Left cardiac atrium (tissue), 4 donors: ENCODE measurements at regions of chr19 and their contacts with region 1.

Region 1: GRCh38 chr19:1275260-1275975 is at the start of gene FAM174C:
- DNase-seq: peak; percentile 97
- ATAC-seq: peak; percentile 83 to 93
- total RNA-seq, gene FAM174C: 19.2 to 21.4 TPM

Region 2: DNA sequence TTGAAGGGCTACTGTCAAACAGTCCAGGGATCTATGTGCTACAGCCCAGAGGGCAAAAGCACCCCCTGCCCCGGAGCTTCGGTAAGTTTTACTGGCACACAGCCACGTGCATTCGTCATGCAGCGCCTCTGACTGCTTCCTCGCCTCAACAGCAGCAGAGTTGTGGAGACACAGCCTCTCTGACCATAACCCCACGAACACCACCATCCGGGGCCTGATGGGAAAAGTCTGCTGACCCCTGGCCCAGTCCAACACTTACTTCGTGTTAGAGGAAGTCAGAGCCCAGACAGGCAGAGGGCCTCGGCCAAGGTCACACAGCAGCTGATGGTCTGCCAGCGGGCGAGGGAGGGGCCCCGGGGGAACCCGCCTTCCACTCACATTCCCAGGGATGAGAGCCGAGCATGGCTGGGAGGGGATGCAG is 42.8 kb before region 1 on chr19:
- intact Hi-C with region 1: no loop called
- DNase-seq: peak; percentile 68
- ATAC-seq: peak; percentile 17 to 24

Region 3: GRCh38 chr19:1343041-1343440 is 67.6 kb after region 1 on chr19:
- intact Hi-C with region 1: loop called in 1 of 2 experiments (anchors 10 kb)
- DNase-seq: no peak
- ATAC-seq: peak in 1 of 2 donors; percentile 23

Region 4: GRCh38 chr19:1355568-1356507 is 80.4 kb after region 1 on chr19:
- intact Hi-C with region 1: loop called in 1 of 2 experiments (anchors 10 kb)
- DNase-seq: no peak
- ATAC-seq: peak; percentile 4 to 15

Region 5: DNA sequence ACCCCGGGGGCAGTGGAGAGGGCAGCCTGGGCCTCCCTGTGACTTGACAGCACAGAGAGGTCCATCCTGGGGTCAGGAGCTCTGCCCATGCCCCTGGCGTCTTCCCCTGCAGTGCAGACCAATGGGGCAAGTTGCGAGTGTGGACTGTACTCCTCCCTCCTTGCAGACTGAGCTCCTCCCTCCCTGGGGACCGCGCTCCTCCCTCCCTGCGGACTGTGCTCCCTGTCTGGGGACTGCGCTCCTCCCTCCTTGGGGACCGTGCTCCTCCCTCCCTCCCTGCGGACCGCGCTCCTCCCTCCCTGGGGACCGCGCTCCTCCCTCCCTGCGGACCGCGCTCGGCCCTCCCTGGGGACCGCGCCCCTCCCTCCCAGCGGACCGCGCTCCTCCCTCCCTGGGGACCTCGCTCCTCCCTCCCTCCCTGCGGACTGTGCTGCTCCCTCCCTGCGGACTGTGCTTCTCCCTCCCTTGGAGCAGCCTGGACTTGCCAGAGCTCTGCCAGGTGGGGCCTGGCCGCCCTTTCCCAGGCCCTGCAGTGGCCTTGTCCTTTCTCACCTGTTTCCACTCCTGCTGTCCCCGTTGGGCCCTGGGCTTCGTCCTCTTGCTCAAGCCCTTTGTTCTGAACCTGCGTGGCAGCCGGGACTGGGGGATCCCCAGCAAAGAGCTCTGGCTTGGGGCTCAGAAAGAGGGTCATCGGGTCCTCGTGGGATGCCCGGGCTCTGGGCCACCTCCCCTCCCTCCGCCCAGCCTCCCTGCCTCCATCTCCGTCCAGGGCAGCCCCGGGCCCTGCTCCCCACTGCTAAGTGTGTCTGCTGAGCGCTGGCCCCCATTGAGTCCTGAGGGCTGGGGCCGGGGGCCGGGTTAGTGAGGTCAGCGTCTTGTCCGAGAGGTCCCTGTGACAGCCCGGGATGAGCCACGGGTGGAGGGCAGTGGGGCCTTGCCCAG is 119.1 kb after region 1 on chr19:
- intact Hi-C with region 1: no loop called
- DNase-seq: no peak
- ATAC-seq: peak in 1 of 2 donors; percentile 5

Region 6: DNA sequence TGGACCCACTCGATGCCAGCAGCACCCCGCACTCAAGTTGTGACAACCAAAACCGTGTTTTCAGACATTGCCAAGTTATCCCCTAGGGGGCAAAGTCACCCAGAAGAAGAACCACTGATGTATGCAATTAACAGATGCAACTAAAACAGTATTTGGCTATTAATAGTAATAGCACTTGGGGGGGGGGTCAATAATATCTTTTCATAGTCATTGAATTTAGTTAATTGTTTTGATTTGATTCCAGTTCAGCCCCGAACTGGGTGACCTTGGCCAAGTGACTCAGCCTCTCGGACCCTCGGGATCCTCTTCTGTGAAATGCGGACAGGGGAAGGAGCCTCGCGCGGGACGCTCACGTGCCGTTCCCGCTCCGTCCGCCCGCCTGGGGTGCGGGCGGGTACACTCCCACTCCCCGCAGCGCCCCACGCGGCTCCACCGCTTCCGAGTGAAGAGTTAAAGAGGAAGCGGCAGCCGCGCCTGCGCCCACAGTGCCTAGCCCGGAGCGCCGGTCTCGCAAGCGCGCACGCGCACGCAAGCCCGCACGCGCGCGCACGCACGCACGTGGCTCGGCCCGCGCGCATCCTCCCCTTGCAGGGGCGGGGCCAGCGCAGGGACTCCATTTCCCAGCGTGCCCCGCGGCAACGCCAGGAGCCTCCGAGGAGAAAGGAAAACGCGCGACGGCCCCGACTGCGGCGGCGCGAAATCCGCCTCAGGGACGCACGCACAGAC is 131.5 kb after region 1 on chr19:
- intact Hi-C with region 1: loop called in 1 of 2 experiments (anchors 10 kb)
- DNase-seq: peak; percentile 99
- ATAC-seq: peak; percentile 89 to 91

Region 7: GRCh38 chr19:1455336-1456120 is 180.1 kb after region 1 on chr19:
- intact Hi-C with region 1: loop called in 1 of 2 experiments (anchors 10 kb)
- DNase-seq: peak; percentile 56
- ATAC-seq: peak; percentile 12 to 30

Region 8: DNA sequence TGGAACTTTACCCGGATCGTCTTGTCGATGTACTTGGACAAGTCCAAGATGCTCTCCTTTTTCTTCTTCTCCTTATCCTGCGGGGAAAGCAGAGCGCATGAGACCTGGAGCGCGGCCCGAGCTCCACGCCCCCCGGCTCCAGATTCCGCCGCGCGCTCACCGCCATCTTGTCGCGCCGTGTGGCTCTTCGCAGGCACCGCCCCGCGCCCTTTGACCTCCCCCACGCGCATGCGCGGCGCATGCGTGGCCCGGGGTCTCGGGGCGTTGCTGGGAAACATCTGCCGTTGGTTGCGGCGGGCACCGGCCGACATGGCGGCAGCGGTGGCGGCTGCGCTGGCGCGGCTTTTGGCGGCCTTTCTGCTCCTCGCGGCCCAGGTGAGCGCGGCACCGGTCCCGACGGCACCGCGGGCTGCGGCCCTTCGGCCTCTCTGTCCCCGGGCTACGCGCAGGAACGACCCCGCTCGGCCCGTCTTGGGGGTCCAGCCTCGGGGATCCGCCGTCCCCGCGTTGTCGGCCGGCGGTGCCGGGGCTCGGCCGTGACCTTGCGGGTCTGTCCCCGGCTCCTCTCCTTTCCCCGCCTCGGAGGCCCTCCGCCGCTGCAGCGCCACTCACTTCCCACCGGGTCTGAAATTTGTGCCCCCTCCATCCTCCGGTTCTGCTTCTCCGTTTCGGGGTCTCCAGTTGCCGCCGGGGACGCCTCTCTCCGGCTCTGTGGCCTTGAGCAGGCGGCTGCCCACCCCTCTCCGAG is 1053.2 kb after region 1 on chr19 and contains the starts of genes LSM7 and SPPL2B:
- intact Hi-C with region 1: no loop called
- DNase-seq: peak; percentile 91
- ATAC-seq: peak; percentile 95 to 98
- total RNA-seq, gene LSM7: 43.6 to 47.7 TPM
- total RNA-seq, gene SPPL2B: 22.9 to 33.7 TPM